ENCODE measurements at regions of chr12 and their contacts with region 1.

Region 1: GRCh38 chr12:49866859-49867579 is 24.1 kb upstream of the BCDIN3D start:
- DNase-seq: peak; percentile 16 to 78
- H3K4me3 ChIP-seq: no peak overlapping the region
- H3K27ac ChIP-seq: no peak overlapping the region
- H3K4me1 ChIP-seq: peaks cover 0 to 9% of the 10 kb centered on the region in 2 donors
- H3K27me3 ChIP-seq: no peaks in the 10 kb centered on the region
- CTCF ChIP-seq: peak; percentile 86 to 99 (median 96)

Region 2: DNA sequence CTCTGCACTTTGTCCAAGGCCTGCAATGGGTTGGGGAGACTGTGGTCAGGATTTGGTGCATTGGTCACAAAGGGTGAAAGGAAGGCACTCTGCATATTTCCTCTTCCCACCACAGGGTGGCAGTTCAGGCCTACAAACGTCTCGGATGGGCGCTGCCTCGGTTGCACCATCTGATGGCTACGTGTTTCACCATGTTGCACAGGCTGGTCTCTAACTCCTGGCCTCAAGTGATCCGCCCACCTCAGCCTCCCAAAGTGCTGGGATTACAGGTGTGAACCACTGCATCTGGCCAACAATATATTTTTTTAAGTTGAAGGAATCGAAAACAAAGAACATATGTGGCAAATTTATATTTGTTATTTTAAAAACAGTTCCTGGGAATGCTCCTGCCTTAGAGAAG is 90.6 kb before region 1 on chr12:
- intact Hi-C with region 1: loop called (anchors 1 kb)
- DNase-seq: peak in 1 of 2 donors; percentile 78
- H3K4me3 ChIP-seq: no peak overlapping the region
- H3K27ac ChIP-seq: no peak overlapping the region
- H3K4me1 ChIP-seq: no peaks in the 10 kb centered on the region
- H3K27me3 ChIP-seq: no peaks in the 10 kb centered on the region
- CTCF ChIP-seq: peak; percentile 70 to 83 (median 80)

Region 3: GRCh38 chr12:49800421-49801140 is 66.4 kb before region 1 on chr12:
- intact Hi-C with region 1: no loop called
- DNase-seq: no peak
- H3K4me3 ChIP-seq: no peak overlapping the region
- H3K27ac ChIP-seq: peak overlapping the region; percentile 18 to 20
- H3K4me1 ChIP-seq: no peaks in the 10 kb centered on the region
- H3K27me3 ChIP-seq: no peaks in the 10 kb centered on the region
- CTCF ChIP-seq: no peak

Region 4: DNA sequence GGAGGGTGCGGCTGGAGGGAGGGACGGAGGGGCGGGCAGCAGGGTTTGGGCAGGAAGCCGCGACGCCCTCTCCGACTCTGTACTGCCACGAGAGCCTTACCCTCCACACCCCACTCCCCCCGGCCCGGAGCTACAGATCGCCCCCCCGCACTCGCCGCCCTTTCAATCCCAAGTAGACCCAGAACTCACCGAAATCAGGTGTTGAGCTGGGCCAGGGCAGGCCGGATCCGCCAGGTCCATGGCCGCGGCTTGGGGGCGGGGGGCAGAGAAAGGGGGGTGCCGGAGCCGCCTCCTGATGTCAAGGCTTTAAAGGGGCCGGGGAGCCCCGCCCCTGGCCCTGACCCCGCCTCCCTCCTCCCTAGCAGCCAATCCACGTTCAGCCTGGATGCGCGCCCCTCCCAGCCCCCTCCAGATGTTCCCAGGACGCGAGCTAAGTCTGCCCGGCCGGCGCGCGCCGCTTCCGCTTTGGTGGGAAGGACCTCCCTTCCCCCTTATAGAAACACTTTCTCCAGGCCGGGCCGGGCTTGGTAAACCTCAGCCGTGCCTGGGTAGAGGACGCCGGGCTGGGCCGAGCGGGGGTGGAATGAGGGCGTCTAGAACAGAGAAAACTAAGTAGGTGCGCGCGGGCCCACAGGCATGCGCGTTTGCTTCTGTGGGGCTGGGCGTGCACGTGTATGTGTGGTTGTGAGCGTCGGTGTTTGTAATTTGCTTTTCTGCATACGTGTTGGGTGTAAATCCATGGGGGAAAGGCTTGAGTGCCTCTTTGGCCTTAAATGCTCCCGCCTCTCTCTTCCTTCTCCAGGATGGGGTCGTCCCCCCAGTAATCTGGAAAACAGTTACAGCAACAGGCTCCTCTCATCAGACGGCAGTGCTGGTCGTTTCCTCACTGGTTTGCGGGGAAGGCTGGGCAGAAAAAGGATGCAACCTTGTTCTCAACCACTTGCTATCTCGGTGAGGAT is 38.6 kb before region 1 on chr12 and contains the start of gene NCKAP5L:
- intact Hi-C with region 1: loop called (anchors 1 kb)
- DNase-seq: peak; percentile 88 to 99
- H3K4me3 ChIP-seq: peak within 1 kb of the TSS; percentile 99
- H3K27ac ChIP-seq: peak within 1 kb of the TSS; percentile 91 to 92
- H3K4me1 ChIP-seq: peaks cover 5 to 28% of the 10 kb centered on the region in 2 donors
- H3K27me3 ChIP-seq: no peaks in the 10 kb centered on the region
- CTCF ChIP-seq: no peak
- total RNA-seq, gene NCKAP5L: 33.4 TPM

Region 5: DNA sequence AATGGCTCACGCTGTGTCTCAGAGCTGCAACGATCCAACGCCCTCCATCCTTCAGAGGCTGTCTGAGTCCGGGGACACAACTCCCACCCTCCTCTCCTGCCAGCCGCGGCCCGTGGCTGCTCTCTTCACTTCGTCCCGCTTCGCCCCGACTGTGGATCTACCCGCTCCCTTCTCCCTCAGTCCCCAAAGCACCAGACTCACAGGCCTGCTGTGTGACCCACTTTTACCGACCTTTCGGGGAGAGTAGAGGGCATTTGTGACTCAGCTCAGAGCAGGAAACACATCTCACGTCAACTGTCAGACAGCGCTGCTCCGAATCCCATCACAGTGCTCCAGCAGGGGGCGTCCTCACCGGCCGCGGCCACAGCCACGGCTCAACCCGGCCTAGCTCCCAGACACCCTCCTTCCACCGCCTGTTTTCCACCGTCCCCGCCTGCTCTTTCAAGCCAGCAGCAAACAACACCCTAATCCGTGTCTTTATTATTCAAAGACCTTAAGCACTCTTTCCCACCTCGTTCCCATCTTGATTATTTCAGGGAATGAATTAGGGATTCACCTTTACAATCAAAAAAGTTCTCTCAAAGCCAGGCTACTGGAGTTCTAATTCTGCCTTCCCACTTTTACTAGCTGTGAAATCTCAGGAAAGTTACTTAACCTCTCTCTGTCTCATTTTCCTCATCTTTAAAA is 78.5 kb after region 1 on chr12:
- intact Hi-C with region 1: loop called (anchors 5 kb)
- DNase-seq: peak; percentile 33 to 86
- H3K4me3 ChIP-seq: peak overlapping the region in 1 of 2 donors; percentile 47
- H3K27ac ChIP-seq: no peak overlapping the region
- H3K4me1 ChIP-seq: no peaks in the 10 kb centered on the region
- H3K27me3 ChIP-seq: no peaks in the 10 kb centered on the region
- CTCF ChIP-seq: peak; percentile 73 to 95 (median 83)

Region 6: GRCh38 chr12:49967042-49967776 is 100.2 kb after region 1 on chr12:
- intact Hi-C with region 1: loop called (anchors 2 kb)
- DNase-seq: peak; percentile 36 to 91
- H3K4me3 ChIP-seq: peak overlapping the region; percentile 44 to 51
- H3K27ac ChIP-seq: no peak overlapping the region
- H3K4me1 ChIP-seq: peaks cover 0 to 17% of the 10 kb centered on the region in 2 donors
- H3K27me3 ChIP-seq: no peaks in the 10 kb centered on the region
- CTCF ChIP-seq: peak; percentile 76 to 95 (median 83)

Region 7: DNA sequence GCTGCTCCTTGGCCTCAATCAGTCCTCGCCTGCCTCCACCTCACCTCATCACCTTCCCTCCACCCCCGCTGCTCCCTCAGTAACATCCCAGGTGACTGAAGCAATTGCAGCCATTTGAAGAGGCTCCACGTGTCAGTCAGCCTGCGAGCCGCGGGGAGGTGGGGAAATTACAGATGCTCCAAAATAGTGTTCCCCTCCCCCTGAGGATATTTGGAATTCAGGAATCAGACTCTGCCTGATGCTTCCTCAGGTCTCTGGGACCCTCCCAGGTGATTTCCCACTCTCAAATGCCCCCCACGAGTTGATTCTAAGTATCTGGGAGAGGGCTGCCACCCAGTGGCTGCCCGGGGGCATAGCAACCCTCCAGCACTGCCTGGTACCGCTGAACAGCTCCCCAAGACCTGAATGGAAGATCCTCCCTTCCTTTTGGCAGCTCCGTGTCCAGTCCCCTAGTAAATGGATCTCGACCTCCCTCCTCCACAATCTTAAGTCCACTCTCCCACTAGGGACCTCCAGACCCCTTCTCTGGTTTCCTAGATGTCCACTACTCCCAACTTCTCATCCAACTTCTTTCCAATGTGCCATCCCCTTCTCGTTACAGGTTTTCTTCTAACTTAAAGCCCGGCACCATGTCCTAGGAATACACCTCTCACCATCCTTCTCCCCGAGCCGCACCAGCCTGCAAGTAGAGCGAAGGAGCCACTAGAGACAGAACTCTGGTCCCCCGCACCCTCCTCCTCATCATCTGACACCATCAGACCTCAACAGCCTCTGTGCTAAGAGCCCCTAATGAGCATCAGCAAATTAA is 189.0 kb after region 1 on chr12:
- intact Hi-C with region 1: loop called (anchors 5 kb)
- DNase-seq: no peak
- H3K4me3 ChIP-seq: no peak overlapping the region
- H3K27ac ChIP-seq: no peak overlapping the region
- H3K4me1 ChIP-seq: peaks cover 2 to 5% of the 10 kb centered on the region in 2 donors
- H3K27me3 ChIP-seq: no peaks in the 10 kb centered on the region
- CTCF ChIP-seq: peak; percentile 78 to 94 (median 92)

Measured in ascending aorta (tissue), 2 donors.